ENCODE measurements at regions of chr6 and their contacts with region 1.

Region 1: DNA sequence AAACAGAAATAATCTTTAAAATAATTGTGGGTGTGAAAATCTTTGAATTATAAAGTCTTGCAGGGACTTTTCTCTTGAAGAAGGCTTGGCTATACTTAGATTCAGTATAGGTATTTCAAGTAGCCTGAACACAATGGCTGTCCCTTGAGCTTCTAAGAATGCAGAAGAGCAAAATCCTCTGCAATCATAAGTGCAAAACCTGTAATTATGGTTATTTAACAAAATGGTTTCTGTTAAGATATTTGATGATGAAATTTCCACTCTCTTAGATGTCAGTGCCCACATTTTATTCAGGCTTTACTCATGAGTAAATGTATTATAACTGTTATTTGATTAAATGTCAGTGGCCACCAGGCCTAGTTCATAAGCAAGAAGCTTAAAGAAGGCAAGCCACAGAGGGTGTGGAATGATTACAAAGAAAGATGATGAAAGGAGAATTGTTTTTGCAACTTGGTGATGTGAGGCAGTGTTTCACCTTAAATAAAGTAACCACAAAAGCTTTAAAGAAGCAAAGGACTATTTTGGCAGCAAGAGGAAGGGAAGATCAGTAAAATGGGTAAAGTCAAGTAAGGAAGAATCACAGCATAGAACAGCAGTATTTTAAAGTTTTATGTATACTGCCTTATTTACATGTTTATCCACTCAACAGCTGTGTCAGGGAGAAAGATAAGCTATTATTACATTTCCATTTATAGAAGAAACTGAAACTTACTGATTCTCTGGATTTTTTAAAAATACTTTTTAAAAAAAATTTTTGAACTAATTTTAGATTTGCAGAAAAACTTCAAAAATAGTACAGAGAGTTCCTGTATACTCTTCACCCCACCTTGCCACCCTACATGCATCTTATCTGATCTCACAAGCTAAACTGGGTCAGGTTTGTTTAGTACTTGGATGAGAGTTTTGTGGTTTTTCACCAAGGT is 351.1 kb upstream of the RUNX2 start:
- DNase-seq: no peak
- H3K4me3 Mint-ChIP-seq: peak overlapping the region; percentile 4
- H3K27ac Mint-ChIP-seq: peak overlapping the region; percentile 84
- H3K4me1 Mint-ChIP-seq: peaks cover 43% of the 10 kb centered on the region
- H3K27me3 Mint-ChIP-seq: no peaks in the 10 kb centered on the region

Region 2: DNA sequence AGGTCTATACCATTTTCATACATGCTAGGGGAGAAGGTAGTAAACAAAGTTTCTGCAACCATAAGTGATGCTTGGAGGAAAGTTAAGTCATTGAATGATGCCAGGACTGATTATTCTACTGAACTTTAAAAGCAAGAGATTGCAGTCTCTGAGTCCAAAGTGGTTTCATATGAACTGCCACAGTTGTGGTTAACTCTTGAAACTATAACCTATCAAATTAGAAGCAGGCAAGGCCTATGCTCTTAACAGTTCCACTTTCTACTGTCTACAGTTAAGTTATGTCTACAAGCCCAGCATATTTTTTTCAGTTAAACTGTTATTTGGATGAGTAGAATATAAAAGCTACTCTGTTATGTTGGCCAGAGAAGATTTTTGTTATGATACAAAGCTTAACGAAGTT is 24.7 kb after region 1 on chr6:
- intact Hi-C with region 1: loop called (anchors 1 kb)
- DNase-seq: peak; percentile 8
- H3K4me3 Mint-ChIP-seq: peak overlapping the region; percentile 54
- H3K27ac Mint-ChIP-seq: peak overlapping the region; percentile 73
- H3K4me1 Mint-ChIP-seq: peaks cover 32% of the 10 kb centered on the region
- H3K27me3 Mint-ChIP-seq: no peaks in the 10 kb centered on the region

Region 3: GRCh38 chr6:45021676-45022075 is 44.7 kb after region 1 on chr6:
- intact Hi-C with region 1: loop called (anchors 5 kb)
- DNase-seq: no peak
- H3K4me3 Mint-ChIP-seq: no peak overlapping the region
- H3K27ac Mint-ChIP-seq: peak overlapping the region; percentile 23
- H3K4me1 Mint-ChIP-seq: peaks cover 19% of the 10 kb centered on the region
- H3K27me3 Mint-ChIP-seq: no peaks in the 10 kb centered on the region

Region 4: DNA sequence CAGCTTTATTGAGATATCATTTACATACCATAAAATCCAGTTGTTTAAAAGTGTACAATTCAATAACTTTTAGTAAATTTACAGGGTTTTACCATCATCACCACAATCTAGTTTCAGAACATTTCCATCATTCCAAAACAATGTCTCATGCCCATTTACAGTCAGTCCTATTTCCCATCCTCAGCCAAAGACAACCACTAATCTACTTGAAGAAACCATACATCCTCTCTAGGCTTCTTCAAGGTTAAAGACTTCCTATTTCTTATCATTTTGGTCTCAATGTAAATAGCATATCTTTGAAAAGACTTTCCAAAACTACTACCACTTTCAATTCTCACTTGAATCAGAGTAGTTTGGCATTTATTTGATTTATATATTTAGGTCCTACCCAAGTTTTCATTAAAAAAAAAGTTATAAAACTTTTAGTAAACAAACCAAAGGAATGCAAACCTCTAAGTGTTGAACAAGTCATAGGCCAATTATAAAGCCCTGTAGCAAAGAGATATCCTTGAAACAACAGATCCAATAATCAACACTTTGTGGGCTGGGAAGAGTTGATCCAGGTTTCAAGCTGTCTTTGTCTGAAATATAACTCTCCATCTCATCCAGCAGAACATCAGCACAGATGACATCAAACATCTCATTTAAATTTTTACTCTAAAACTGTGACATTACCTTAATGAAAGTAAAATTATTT is 139.9 kb after region 1 on chr6:
- intact Hi-C with region 1: loop called (anchors 2 kb)
- DNase-seq: no peak
- H3K4me3 Mint-ChIP-seq: no peak overlapping the region
- H3K27ac Mint-ChIP-seq: peak overlapping the region; percentile 47
- H3K4me1 Mint-ChIP-seq: peaks cover 24% of the 10 kb centered on the region
- H3K27me3 Mint-ChIP-seq: no peaks in the 10 kb centered on the region

Measured in activated T-helper 1 cell treated with anti-CD3 and anti-CD28 coated beads, Interleukin-12 subunit alpha, Interleukin-12 subunit beta, Interleukin-2, Interleukin-4 antibody, amounts not matched to agents 30 ng/mL and 10 ng/mL and 1 ng/mL, durations not matched to agents 14 hours and 24 hours and 36 hours (primary cell).